Activated CD4-positive, alpha-beta memory T cell treated with anti-CD3 and anti-CD28 coated beads, Interleukin-2, amount 10 ng/mL, durations not matched to agents 7 days and 5 days (primary cell): ENCODE measurements at regions of chr18 and their contacts with region 1.

Region 1: GRCh38 chr18:62584241-62585120 is 61.7 kb downstream of the ZCCHC2 start:
- DNase-seq: peak; percentile 85
- H3K4me3 Mint-ChIP-seq: peak overlapping the region; percentile 12
- H3K27ac Mint-ChIP-seq: peak overlapping the region; percentile 89
- H3K4me1 Mint-ChIP-seq: peaks cover 48% of the 10 kb centered on the region
- H3K27me3 Mint-ChIP-seq: no peaks in the 10 kb centered on the region

Region 2: DNA sequence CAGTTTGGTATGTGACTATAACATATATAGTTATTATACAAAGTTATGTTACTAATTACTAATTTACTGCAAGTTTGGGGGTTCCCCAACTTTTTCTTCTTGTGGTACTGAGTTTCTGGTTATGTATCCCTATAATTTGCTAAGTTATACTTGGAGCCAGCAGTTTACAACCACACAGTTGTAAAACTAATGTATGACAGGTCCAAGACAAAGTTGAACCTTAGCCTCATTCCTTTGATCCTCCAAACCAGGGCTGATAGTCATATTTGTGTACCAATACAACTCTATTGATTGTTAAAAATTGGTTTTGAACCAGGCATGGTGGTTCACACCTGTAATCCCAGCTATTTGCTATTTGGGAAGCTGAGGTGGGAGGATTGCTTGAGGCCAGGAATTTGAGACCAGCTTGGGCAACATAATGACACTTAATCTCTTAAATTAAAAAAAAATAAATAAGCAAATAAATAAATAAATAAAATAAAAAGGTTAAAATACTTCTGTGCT is 373.1 kb before region 1 on chr18:
- CTCF ChIA-PET with region 1: no interaction called
- POLR2A ChIA-PET with region 1: no interaction called
- DNase-seq: no peak
- H3K4me3 Mint-ChIP-seq: no peak overlapping the region
- H3K27ac Mint-ChIP-seq: no peak overlapping the region
- H3K4me1 Mint-ChIP-seq: peaks cover 14% of the 10 kb centered on the region
- H3K27me3 Mint-ChIP-seq: no peaks in the 10 kb centered on the region

Region 3: GRCh38 chr18:62505669-62506494 is 78.6 kb before region 1 on chr18:
- CTCF ChIA-PET with region 1: interaction called, 10 read pairs
- POLR2A ChIA-PET with region 1: interaction called, 3 read pairs
- DNase-seq: peak; percentile 48
- H3K4me3 Mint-ChIP-seq: peak overlapping the region; percentile 70
- H3K27ac Mint-ChIP-seq: peak overlapping the region; percentile 100
- H3K4me1 Mint-ChIP-seq: peaks cover 24% of the 10 kb centered on the region
- H3K27me3 Mint-ChIP-seq: no peaks in the 10 kb centered on the region

Region 4: DNA sequence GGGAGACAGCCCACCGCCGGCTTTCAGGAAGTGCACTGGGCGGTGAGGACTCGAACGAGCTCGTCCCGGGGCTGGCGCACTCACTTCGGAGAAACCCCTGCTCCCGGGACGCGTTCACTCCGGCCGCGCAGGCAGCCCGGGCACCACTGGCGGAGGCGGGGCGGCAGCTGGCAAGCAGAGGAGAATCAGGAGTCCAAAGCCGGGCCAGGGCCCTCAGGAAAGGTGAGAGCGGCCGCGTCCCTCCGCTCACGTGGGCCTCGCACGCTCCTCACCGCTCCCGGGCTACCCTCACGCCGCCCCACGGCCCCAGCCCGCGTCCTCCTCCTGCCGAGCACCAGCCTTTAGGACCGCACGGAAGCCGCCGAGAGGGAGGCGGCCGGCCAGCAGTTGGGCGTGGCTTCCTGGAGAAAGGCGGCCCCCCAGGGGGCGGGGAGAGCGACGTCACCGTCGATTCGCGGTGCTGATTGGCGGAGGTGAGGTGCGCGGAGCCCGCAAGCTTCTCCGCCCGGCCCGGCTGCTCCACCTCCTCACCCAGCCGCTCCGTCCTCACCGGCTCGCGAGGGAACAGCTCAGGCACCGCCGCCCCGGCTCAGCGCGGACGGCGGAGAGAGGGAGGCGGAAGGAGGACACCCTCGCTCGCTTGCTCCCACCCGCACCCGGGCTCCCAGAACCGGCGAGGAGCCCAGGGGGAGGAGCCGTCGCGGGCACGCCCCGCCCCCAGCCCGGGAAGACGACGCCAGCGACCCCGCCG is 61.8 kb before region 1 on chr18 and contains the start of gene ZCCHC2:
- CTCF ChIA-PET with region 1: interaction called, 11 read pairs
- POLR2A ChIA-PET with region 1: interaction called, 12 read pairs
- DNase-seq: peak; percentile 99
- H3K4me3 Mint-ChIP-seq: peak within 1 kb of the TSS; percentile 93
- H3K27ac Mint-ChIP-seq: peak within 1 kb of the TSS; percentile 96
- H3K4me1 Mint-ChIP-seq: peaks cover 21% of the 10 kb centered on the region
- H3K27me3 Mint-ChIP-seq: no peaks in the 10 kb centered on the region
- total RNA-seq, gene ZCCHC2: 51.7 to 52.3 TPM

Region 5: GRCh38 chr18:62571648-62572047 is 12.8 kb before region 1 on chr18:
- CTCF ChIA-PET with region 1: interaction called, 11 read pairs
- POLR2A ChIA-PET with region 1: no interaction called
- DNase-seq: no peak
- H3K4me3 Mint-ChIP-seq: no peak overlapping the region
- H3K27ac Mint-ChIP-seq: no peak overlapping the region
- H3K4me1 Mint-ChIP-seq: peaks cover 32% of the 10 kb centered on the region
- H3K27me3 Mint-ChIP-seq: no peaks in the 10 kb centered on the region

Region 6: DNA sequence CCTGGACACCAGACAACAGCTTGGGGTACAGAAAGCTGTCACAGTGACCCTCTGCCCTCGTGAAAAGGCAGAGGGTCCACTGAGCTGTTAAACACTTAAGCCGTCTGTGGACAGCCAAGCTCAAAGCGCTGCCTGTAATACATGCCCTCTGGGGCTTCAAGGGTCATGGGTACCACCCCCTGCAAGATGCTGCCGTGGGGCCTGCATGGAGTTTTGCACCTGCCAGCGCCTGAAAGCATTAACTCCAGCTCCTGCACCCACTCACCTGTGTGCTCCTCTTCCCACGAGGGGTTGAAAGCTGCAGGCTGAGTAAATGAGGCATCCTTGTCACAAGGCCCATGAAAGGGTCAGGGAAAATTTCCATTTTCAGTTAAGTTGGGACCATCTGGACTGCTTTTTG is 60.3 kb after region 1 on chr18:
- CTCF ChIA-PET with region 1: no interaction called
- POLR2A ChIA-PET with region 1: no interaction called
- DNase-seq: no peak
- H3K4me3 Mint-ChIP-seq: no peak overlapping the region
- H3K27ac Mint-ChIP-seq: no peak overlapping the region
- H3K4me1 Mint-ChIP-seq: no peaks in the 10 kb centered on the region
- H3K27me3 Mint-ChIP-seq: peaks cover 28% of the 10 kb centered on the region

Region 7: DNA sequence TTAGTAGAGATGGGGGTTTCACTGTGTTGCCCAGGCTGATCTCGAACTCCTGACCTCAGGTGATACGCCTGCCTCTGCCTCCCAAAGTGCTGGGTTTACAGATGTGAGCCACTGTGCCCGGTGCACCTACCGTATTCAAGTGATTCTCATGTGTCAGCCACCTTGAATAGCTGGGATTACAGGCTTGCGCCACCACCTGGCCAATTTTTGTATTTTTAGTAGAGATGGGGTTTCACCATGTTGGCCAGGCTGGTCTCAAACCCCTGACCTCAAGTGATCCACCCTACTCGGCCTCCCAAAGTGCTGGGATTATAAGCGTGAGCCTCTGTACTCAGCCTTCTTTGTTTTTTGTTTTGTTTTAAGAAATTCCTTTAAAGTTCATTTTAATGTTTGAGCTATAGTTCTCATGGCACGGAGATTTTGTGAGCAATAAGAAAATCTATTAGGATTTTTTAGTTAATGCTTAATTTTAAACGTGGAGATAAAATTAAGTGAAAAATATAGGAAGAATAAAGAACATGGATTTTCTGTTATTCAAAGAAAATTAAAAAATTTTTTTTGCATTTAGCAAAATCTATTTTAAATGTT is 373.5 kb after region 1 on chr18:
- CTCF ChIA-PET with region 1: interaction called, 15 read pairs
- POLR2A ChIA-PET with region 1: no interaction called
- DNase-seq: peak; percentile 62
- H3K4me3 Mint-ChIP-seq: no peak overlapping the region
- H3K27ac Mint-ChIP-seq: no peak overlapping the region
- H3K4me1 Mint-ChIP-seq: peaks cover 14% of the 10 kb centered on the region
- H3K27me3 Mint-ChIP-seq: no peaks in the 10 kb centered on the region

Region 8: DNA sequence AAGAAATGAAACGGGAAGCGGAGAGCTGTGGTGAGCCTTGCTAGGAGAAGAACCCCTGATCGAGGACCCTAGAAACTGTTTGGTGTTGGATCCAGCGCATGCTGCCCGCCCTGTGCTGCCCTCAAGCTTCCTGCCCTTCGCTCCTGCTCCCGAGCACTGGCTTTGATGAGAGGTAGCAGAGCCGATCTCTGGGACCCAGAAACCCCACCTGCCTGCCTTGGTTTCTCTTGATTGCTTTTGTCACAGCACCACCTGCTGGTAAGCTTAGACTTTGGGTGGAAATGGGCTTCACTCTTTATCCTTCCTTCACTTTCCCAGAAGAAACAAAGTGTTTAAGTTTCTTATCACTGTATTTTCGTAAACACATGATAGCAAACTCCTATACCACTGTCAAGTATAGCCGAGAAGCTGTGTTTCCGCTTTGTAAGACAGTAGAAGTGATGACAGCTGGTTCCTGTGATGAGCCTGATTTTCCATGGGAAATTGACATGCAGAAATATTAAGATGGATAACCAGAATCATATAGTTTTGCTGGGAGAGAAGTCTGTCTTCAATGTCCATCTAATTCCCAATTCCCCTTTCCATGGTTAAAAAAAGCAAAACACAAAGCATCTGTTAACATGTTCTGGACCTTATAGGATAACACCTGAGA is 398.2 kb after region 1 on chr18:
- CTCF ChIA-PET with region 1: interaction called, 21 read pairs
- POLR2A ChIA-PET with region 1: no interaction called
- DNase-seq: peak; percentile 59
- H3K4me3 Mint-ChIP-seq: no peak overlapping the region
- H3K27ac Mint-ChIP-seq: no peak overlapping the region
- H3K4me1 Mint-ChIP-seq: peaks cover 7% of the 10 kb centered on the region
- H3K27me3 Mint-ChIP-seq: no peaks in the 10 kb centered on the region